H1 (cell line): ENCODE measurements at regions of chr12 and their contacts with region 1.

Region 1: DNA sequence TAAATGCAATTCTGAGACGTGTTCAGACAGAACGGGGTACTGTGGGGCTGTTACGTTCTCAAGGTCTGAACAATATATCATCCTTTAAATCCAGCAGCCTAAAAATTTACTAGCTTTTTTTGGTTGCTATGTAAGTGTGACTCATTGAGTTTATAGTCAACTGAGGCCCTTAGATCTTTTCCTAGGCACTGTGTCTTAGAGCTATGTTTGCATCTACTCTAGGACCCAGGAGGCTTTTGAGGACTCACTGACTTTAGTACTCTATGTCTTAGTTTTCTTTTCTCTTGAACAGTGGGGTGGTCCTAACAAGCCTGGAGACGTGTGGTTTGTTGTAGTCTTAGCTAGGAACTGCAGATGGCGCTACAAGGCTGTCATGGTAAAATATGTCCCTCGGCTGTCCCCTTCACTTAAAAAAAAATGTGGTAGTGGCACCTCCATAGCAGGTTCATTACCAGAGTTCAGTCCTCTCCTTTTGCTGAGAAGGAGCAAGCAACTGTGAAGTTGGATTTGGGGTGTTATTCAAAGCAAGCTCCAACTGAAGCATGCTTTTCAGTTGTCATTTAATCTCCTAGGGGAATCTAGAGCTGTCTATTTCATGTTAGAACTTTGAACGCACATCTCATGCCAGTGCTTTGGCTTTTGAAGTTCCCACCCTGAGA is 8.7 kb upstream of the SPATS2 start:
- DNase-seq: peak in 1 of 2 experiments; percentile 67
- H3K4me3 ChIP-seq: no peak overlapping the region
- H3K27ac ChIP-seq: no peak overlapping the region
- H3K4me1 ChIP-seq: peaks cover 0 to 3% (median 0%) of the 10 kb centered on the region in 4 experiments; a peak in 1 of 7 replicates
- H3K27me3 ChIP-seq: no peaks in the 10 kb centered on the region
- CTCF ChIP-seq: peak; percentile 38 to 93 (median 79)
- EP300 ChIP-seq: no peak
- POLR2A ChIP-seq: no peak
- RAD21 ChIP-seq: peak; percentile 97

Region 2: GRCh38 chr12:49069507-49070346 is 288.9 kb before region 1 on chr12 and contains the start of gene RHEBL1:
- CTCF ChIA-PET with region 1: no interaction called
- POLR2A ChIA-PET with region 1: no interaction called
- DNase-seq: peak; percentile 86 to 98
- H3K4me3 ChIP-seq: peak within 1 kb of the TSS; percentile 70 to 93 (median 80)
- H3K27ac ChIP-seq: no peak within 1 kb of the TSS
- H3K4me1 ChIP-seq: peaks cover 2 to 6% (median 4%) of the 10 kb centered on the region in 4 experiments; a peak in 5 of 7 replicates
- H3K27me3 ChIP-seq: peaks cover 0 to 8% (median 3%) of the 10 kb centered on the region in 4 experiments; a peak in 5 of 7 replicates
- CTCF ChIP-seq: no peak
- EP300 ChIP-seq: no peak
- POLR2A ChIP-seq: no peak
- RAD21 ChIP-seq: no peak
- total RNA-seq, gene RHEBL1: 7.0 and 7.5 TPM in 2 replicates

Region 3: GRCh38 chr12:49223590-49224369 is 134.8 kb before region 1 on chr12:
- CTCF ChIA-PET with region 1: no interaction called
- POLR2A ChIA-PET with region 1: no interaction called
- DNase-seq: no peak
- H3K4me3 ChIP-seq: no peak overlapping the region
- H3K27ac ChIP-seq: no peak overlapping the region
- H3K4me1 ChIP-seq: no peaks in the 10 kb centered on the region
- H3K27me3 ChIP-seq: no peaks in the 10 kb centered on the region
- CTCF ChIP-seq: no peak
- EP300 ChIP-seq: no peak
- POLR2A ChIP-seq: no peak
- RAD21 ChIP-seq: no peak

Region 4: GRCh38 chr12:49264738-49265515 is 93.7 kb before region 1 on chr12 and contains the start of gene TUBA1C:
- CTCF ChIA-PET with region 1: no interaction called
- POLR2A ChIA-PET with region 1: no interaction called
- DNase-seq: peak; percentile 85 to 97
- H3K4me3 ChIP-seq: peak within 1 kb of the TSS; percentile 80 to 94 (median 90)
- H3K27ac ChIP-seq: peak within 1 kb of the TSS; percentile 71; the same call in 1 of the 2 replicates
- H3K4me1 ChIP-seq: peaks cover 0 to 2% (median 0%) of the 10 kb centered on the region in 4 experiments; a peak in 4 of 7 replicates
- H3K27me3 ChIP-seq: no peaks in the 10 kb centered on the region
- CTCF ChIP-seq: no peak
- EP300 ChIP-seq: no peak
- POLR2A ChIP-seq: peak; percentile 97 to 99
- RAD21 ChIP-seq: no peak
- total RNA-seq, gene TUBA1C: 504 and 533 TPM in 2 replicates

Region 5: DNA sequence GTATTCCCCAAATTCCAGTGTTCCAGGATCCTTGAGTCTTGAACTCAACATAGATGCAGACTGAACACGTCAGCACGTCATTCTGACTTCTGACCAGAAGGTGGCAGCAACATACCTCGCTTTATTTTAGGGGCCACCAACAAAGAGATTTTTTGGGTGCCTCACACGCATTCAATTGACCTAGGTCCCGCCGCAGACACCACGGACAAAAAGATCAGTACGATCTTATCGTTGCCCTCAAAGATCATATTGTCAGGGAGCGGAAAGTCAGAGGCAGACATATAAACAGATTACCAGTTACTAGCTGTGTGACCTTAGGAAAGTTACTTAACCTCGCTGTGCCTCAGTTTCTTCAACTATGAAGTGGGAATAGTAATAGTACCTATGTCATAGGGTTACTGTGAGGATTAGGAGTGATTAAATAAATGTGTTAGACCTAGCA is 70.2 kb before region 1 on chr12:
- CTCF ChIA-PET with region 1: interaction called, 38 read pairs
- POLR2A ChIA-PET with region 1: no interaction called
- DNase-seq: peak in 1 of 2 experiments; percentile 82
- H3K4me3 ChIP-seq: no peak overlapping the region
- H3K27ac ChIP-seq: no peak overlapping the region
- H3K4me1 ChIP-seq: peaks cover 0 to 9% (median 7%) of the 10 kb centered on the region in 4 experiments; a peak in 5 of 7 replicates
- H3K27me3 ChIP-seq: peaks cover 4 to 17% (median 16%) of the 10 kb centered on the region in 4 experiments
- CTCF ChIP-seq: peak in 2 of 3 experiments; percentile 79 to 87; a peak in 3 of 4 replicates
- EP300 ChIP-seq: no peak
- POLR2A ChIP-seq: no peak
- RAD21 ChIP-seq: peak; percentile 84 to 86

Region 6: GRCh38 chr12:49342066-49342913 is 16.3 kb before region 1 on chr12:
- CTCF ChIA-PET with region 1: interaction called, 193 read pairs
- POLR2A ChIA-PET with region 1: interaction called, 6 read pairs
- DNase-seq: peak; percentile 93 to 99
- H3K4me3 ChIP-seq: peak overlapping the region; percentile 34 to 78 (median 67)
- H3K27ac ChIP-seq: no peak overlapping the region
- H3K4me1 ChIP-seq: peaks cover 4 to 61% (median 41%) of the 10 kb centered on the region in 4 experiments
- H3K27me3 ChIP-seq: peaks cover 81 to 99% (median 97%) of the 10 kb centered on the region in 4 experiments
- CTCF ChIP-seq: peak; percentile 71 to 93 (median 90)
- EP300 ChIP-seq: no peak; a peak in 1 of 3 replicates
- POLR2A ChIP-seq: no peak
- RAD21 ChIP-seq: peak; percentile 59 to 63

Region 7: DNA sequence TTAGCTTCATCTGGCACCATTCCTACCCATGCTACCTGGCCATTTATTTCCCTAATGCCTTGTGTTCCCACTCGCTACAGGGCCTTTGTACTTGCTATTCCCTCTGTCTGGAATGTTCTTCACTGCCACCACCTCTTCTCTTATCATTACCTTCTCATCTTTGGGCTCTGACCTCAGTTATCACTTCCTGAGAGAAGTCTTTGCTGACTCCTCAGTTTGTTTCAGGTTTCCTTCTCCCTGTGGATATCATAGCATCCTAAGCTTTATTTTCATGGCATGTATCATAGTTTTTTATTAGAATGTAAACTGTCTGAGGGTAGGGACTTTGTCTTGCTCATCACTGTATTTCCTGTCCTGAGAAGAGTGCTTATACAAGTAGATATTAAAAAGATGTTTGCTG is 38.4 kb after region 1 on chr12:
- CTCF ChIA-PET with region 1: interaction called, 30 read pairs
- POLR2A ChIA-PET with region 1: no interaction called
- DNase-seq: no peak
- H3K4me3 ChIP-seq: no peak overlapping the region
- H3K27ac ChIP-seq: no peak overlapping the region
- H3K4me1 ChIP-seq: peaks cover 0 to 2% (median 0%) of the 10 kb centered on the region in 4 experiments; a peak in 2 of 7 replicates
- H3K27me3 ChIP-seq: no peaks in the 10 kb centered on the region
- CTCF ChIP-seq: no peak
- EP300 ChIP-seq: no peak
- POLR2A ChIP-seq: no peak
- RAD21 ChIP-seq: no peak

Region 8: DNA sequence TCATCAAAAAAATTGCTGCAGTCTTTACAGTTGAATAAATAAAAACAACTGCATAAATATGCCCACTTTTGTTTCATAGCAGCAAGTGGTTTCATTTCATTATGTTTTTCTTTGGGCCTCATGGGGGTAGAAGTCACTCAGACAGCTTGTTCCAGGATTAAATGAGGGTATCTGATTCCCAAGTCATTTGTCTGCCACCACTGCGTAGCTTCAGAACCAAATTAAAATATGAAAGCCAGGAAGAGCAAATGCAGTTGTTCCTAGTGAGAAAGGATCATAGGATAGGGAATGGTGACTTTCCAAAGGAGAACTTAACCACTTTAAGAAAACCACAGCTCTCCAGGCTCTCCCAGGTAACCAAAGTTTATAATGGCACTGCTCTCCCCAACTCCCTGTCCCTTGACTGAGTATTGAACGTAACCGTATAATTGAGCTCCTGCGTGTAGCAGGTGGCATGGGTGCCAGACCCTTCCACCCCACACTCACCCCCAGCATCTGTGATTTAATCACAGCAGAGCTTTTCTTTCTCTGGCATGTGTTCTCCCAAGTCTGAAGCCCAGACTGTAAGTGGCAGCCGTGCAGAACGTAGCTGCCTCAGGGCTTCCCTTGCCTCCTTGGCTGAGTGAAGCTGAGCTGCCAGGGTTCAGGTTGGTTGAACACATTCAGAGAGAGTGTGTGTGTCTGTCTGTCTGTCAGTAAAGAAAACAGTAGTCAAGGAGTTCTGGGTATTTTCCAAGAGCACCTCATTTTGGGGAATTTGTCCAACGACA is 168.9 kb after region 1 on chr12:
- CTCF ChIA-PET with region 1: interaction called, 72 read pairs
- POLR2A ChIA-PET with region 1: no interaction called
- DNase-seq: no peak
- H3K4me3 ChIP-seq: no peak overlapping the region
- H3K27ac ChIP-seq: no peak overlapping the region
- H3K4me1 ChIP-seq: peaks cover 0 to 3% (median 0%) of the 10 kb centered on the region in 4 experiments; a peak in 1 of 7 replicates
- H3K27me3 ChIP-seq: no peaks in the 10 kb centered on the region; a peak in 1 of 7 replicates
- CTCF ChIP-seq: no peak
- EP300 ChIP-seq: no peak
- POLR2A ChIP-seq: no peak
- RAD21 ChIP-seq: no peak

Region 9: GRCh38 chr12:49553512-49554088 is 195.0 kb after region 1 on chr12:
- CTCF ChIA-PET with region 1: interaction called, 140 read pairs
- POLR2A ChIA-PET with region 1: interaction called, 3 read pairs
- DNase-seq: no peak
- H3K4me3 ChIP-seq: no peak overlapping the region
- H3K27ac ChIP-seq: no peak overlapping the region
- H3K4me1 ChIP-seq: peaks cover 0 to 12% (median 8%) of the 10 kb centered on the region in 4 experiments; a peak in 6 of 7 replicates
- H3K27me3 ChIP-seq: peaks cover 4 to 28% (median 20%) of the 10 kb centered on the region in 4 experiments
- CTCF ChIP-seq: peak in 2 of 3 experiments; percentile 82 to 99; a peak in 3 of 4 replicates
- EP300 ChIP-seq: no peak
- POLR2A ChIP-seq: no peak
- RAD21 ChIP-seq: peak; percentile 75 to 85